Activated naive CD4-positive, alpha-beta T cell treated with anti-CD3 and anti-CD28 coated beads for 36 hours (primary cell): ENCODE measurements at regions of chr1 and their contacts with region 1.

Region 1: DNA sequence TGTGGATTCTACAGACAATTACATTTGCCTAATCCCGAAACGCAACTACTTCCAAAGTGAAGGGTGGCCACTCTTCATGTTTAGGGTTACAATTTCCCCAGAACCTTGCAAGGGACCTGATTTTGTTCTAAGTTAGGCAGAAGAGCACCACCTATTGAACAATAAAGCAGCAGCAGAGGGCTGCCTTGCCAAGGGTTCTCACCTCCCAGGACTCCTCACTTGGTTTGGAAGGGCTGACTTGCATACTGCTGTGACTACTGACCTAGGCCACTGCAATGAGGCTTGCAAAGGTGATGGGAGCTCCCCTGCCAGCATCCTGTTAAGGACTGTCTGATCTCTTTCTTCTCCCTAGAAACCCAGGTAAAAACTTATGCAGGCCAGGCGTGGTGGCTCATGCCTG is 14.2 kb downstream of the MTOR start:
- DNase-seq: no peak
- H3K4me3 Mint-ChIP-seq: no peak overlapping the region
- H3K27ac Mint-ChIP-seq: no peak overlapping the region
- H3K4me1 Mint-ChIP-seq: no peaks in the 10 kb centered on the region
- H3K27me3 Mint-ChIP-seq: no peaks in the 10 kb centered on the region

Region 2: GRCh38 chr1:11320153-11320936 is 72.2 kb after region 1 on chr1:
- CTCF ChIA-PET with region 1: no interaction called
- intact Hi-C with region 1: no loop called
- DNase-seq: peak; percentile 55
- H3K4me3 Mint-ChIP-seq: no peak overlapping the region
- H3K27ac Mint-ChIP-seq: no peak overlapping the region
- H3K4me1 Mint-ChIP-seq: peaks cover 4% of the 10 kb centered on the region
- H3K27me3 Mint-ChIP-seq: no peaks in the 10 kb centered on the region

Region 3: GRCh38 chr1:11355559-11356475 is 107.7 kb after region 1 on chr1:
- CTCF ChIA-PET with region 1: no interaction called
- intact Hi-C with region 1: loop called (anchors 5 kb)
- DNase-seq: no peak
- H3K4me3 Mint-ChIP-seq: no peak overlapping the region
- H3K27ac Mint-ChIP-seq: no peak overlapping the region
- H3K4me1 Mint-ChIP-seq: peaks cover 13% of the 10 kb centered on the region
- H3K27me3 Mint-ChIP-seq: peaks cover 2% of the 10 kb centered on the region